Adrenal gland (tissue), 19 donors: ENCODE measurements at regions of chr17 and their contacts with region 1.

Region 1: DNA sequence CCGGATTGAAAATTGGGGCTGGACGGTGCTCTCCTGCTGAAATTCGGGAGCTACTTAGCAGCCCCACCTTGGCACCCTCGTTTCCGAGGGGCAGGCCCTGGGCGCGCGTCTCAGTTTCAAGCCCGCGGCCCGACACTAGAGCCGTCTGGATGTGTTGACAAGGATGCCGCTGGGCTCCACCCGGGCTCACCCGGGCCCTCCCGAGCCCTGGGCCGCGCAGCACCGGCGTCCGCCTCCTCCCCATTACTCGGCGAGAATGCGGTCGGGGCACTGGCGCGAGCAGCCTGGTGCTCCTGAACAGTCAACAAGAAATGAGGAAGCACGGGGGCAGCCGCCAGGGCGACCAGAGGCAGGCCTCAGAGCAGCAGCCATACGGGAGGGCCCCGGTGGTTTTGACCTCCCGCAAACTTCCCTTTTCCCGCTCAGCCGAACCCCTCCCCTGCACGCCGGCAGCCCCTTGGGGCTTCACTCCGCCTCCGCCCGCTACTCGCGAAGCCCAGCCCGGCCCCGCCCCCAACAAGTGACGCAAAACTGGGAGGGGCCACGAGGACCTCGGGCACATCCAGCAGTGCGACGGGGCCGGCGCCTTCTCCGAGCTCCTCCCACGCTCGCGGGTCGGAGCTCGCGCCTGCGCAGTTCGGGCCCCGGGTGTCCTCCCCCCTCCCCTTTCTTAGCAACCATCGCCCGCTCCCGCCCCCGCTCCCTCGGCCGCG is 447 bp upstream of the SEC14L1 start:
- DNase-seq: peak; percentile 99 to 100 (median 99)
- H3K4me3 ChIP-seq: peak overlapping the region in 2 of 4 donors; percentile 86 to 96
- H3K27ac ChIP-seq: peak overlapping the region; percentile 89 to 99 (median 95)
- H3K4me1 ChIP-seq: peaks cover 37 to 41% of the 10 kb centered on the region in 2 donors
- H3K27me3 ChIP-seq: no peaks in the 10 kb centered on the region
- CTCF ChIP-seq: peak in 3 of 6 experiments; percentile 22 to 34 (median 34)
- POLR2A ChIP-seq: peak; percentile 85 to 96

Region 2: DNA sequence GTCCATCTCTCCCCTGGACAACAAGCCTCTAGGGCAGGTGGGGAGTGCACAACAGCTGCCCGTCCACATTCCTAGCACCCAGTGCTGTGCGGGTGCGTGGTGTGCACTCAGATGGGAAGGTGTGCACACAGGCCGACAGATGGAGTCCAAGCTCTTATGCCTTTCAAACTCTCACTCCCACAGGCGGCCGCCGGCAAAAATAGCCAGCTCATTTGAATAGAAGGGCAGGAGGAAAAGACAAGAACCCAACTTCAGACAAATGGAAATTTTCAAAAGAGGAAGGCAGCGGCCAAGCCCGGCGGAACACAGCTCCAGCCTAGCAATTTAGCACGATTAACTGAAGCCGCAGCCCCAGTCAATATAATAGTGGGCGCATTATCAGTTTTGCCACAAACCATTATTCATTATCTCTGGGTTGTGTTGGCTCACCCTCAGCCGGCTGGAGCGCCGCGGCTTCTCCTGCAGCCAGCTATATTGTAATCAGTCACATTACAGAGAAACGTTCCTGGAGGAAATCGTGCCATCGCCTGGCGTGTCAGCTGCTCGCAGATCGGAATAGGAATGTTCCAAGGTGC is 103.4 kb before region 1 on chr17:
- intact Hi-C with region 1: no loop called
- DNase-seq: peak in 1 of 7 donors; percentile 57
- H3K4me3 ChIP-seq: no peak overlapping the region
- H3K27ac ChIP-seq: no peak overlapping the region
- H3K4me1 ChIP-seq: no peaks in the 10 kb centered on the region
- H3K27me3 ChIP-seq: peaks cover 18% of the 10 kb centered on the region
- CTCF ChIP-seq: no peak
- POLR2A ChIP-seq: no peak

Region 3: GRCh38 chr17:77096570-77097214 is 43.6 kb before region 1 on chr17:
- intact Hi-C with region 1: loop called in 1 of 2 experiments (anchors 10 kb)
- DNase-seq: peak; percentile 58 to 90 (median 74)
- H3K4me3 ChIP-seq: no peak overlapping the region
- H3K27ac ChIP-seq: peak overlapping the region; percentile 44 to 92 (median 67)
- H3K4me1 ChIP-seq: peaks cover 27 to 43% of the 10 kb centered on the region in 2 donors
- H3K27me3 ChIP-seq: no peaks in the 10 kb centered on the region
- CTCF ChIP-seq: peak; percentile 77 to 99 (median 90)
- POLR2A ChIP-seq: peak in 1 of 2 donors; percentile 44

Region 4: DNA sequence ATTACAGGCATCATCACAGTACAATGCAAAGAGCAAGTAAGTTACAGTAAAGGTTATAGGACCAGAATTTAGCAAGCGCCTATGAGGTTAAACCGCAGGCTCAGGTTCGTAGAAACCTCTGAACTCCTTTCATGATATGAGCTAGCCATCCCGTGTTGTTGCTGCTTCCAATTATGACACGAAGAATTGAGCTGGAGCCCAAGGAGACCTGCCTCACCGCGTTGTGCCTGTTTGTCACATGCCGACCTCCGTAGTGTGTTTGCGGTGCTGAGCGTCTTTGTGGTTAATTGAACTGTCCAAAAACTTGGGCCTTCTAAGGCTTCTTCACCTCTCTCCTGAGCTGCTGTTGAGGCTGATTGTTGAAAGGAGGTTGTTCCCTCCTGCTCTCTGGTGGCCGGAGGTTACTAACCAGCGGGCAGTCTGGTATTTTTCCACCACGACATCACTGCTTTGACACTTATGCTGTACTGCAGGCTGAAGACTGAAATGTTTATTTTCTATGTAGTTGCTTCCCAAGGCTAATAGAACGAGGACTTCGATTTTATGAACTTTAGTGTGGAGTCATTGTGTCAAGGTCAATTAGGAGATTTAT is 68.0 kb after region 1 on chr17:
- intact Hi-C with region 1: loop called in 1 of 2 experiments (anchors 10 kb)
- DNase-seq: peak; percentile 75 to 94 (median 87)
- H3K4me3 ChIP-seq: no peak overlapping the region
- H3K27ac ChIP-seq: peak overlapping the region; percentile 49 to 83 (median 73)
- H3K4me1 ChIP-seq: peaks cover 21 to 32% of the 10 kb centered on the region in 2 donors
- H3K27me3 ChIP-seq: no peaks in the 10 kb centered on the region
- CTCF ChIP-seq: peak; percentile 13 to 73 (median 66)
- POLR2A ChIP-seq: peak in 1 of 2 donors; percentile 50